ENCODE measurements at regions of chr11 and their contacts with region 1.

Region 1: DNA sequence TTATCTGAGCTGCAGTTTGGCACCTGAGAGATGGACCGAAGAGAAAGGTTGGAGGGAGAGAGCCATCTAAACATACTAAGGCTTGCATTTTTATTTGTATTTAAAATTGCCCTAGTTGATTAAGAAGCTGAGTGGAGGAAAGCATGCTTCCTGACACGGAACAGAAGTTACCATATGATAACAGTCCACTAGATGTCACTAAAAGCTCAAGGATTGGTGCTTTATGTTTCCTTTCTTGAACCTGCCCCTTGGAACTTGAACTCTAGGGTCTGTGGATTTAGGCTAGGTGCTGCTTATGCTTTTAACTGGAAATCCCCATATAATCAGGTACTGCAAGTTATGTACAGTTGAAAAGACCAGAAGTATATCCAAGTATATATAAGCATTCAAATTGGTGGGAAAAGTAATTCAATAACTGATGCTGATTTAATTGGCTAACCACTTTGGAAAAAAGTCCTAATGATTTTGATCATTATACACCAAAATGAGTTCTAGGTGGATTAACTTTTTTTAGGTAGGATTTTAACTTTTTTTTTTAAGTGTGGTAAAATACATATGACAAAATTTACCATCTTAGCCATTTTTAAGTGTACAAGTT is 9.5 kb downstream of the RBMXL2 start:
- ATAC-seq: peak; percentile 43 to 84 (median 61)
- H3K4me3 ChIP-seq: no peak overlapping the region
- H3K27ac ChIP-seq: no peak overlapping the region
- H3K4me1 ChIP-seq: no peaks in the 10 kb centered on the region

Region 2: GRCh38 chr11:5441414-5441813 is 1656.9 kb before region 1 on chr11 and contains the start of gene OR51I1:
- in situ Hi-C with region 1: no loop called
- ATAC-seq: no peak
- H3K4me3 ChIP-seq: no peak within 1 kb of the TSS
- H3K27ac ChIP-seq: no peak within 1 kb of the TSS
- H3K4me1 ChIP-seq: no peaks in the 10 kb centered on the region
- total RNA-seq, gene OR51I1: 0.16 to 0.66 (median 0.49) TPM in 4 of 8 experiments, not detected in the others

Region 3: DNA sequence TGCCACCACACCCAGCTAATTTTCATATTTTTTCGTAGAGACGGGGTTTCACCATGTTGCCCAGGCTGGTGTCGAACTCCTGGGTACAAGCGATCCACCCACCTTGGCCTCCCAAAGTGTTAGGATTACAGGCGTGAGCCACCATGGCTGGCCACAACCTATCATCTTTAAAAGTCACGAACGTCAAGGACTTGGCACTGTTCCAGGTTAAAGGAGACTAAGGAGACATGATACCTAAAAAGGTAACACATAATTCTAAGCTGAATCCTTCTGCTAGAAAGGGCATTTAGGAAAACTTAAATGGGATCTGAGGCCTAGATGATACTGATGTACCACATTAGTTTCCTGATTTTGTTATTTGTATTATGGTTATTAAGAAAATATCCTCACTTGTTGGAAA is 110.1 kb after region 1 on chr11:
- in situ Hi-C with region 1: no loop called
- ATAC-seq: no peak
- H3K4me3 ChIP-seq: no peak overlapping the region
- H3K27ac ChIP-seq: no peak overlapping the region
- H3K4me1 ChIP-seq: no peaks in the 10 kb centered on the region

Region 4: GRCh38 chr11:7986768-7987559 is 888.6 kb after region 1 on chr11 and contains the start of gene EIF3F:
- in situ Hi-C with region 1: loop called in 1 of 9 experiments (anchors 25 kb)
- ATAC-seq: peak; percentile 97 to 99 (median 99)
- H3K4me3 ChIP-seq: peak within 1 kb of the TSS; percentile 72 to 99 (median 89)
- H3K27ac ChIP-seq: peak within 1 kb of the TSS; percentile 82 to 95
- H3K4me1 ChIP-seq: peaks cover 10 to 11% of the 10 kb centered on the region in 2 donors
- total RNA-seq, gene EIF3F: 212 to 457 (median 285) TPM